PC-9 (cell line): ENCODE measurements at regions of chr10 and their contacts with region 1.

Region 1: GRCh38 chr10:70537344-70538209 is 59.0 kb downstream of the PALD1 start:
- DNase-seq: peak in 1 of 2 experiments; percentile 61
- H3K4me3 ChIP-seq: no peak overlapping the region
- H3K27ac ChIP-seq: no peak overlapping the region
- H3K4me1 ChIP-seq: no peaks in the 10 kb centered on the region
- H3K27me3 ChIP-seq: no peaks in the 10 kb centered on the region
- CTCF ChIP-seq: peak; percentile 73

Region 2: GRCh38 chr10:70331486-70332268 is 205.9 kb before region 1 on chr10:
- CTCF ChIA-PET with region 1: no interaction called
- POLR2A ChIA-PET with region 1: no interaction called
- intact Hi-C with region 1: no loop called
- DNase-seq: peak; percentile 82 to 98
- H3K4me3 ChIP-seq: no peak overlapping the region
- H3K27ac ChIP-seq: peak overlapping the region; percentile 59
- H3K4me1 ChIP-seq: peaks cover 27% of the 10 kb centered on the region
- H3K27me3 ChIP-seq: no peaks in the 10 kb centered on the region
- CTCF ChIP-seq: peak; percentile 55; the same call in 1 of the 2 replicates

Region 3: GRCh38 chr10:70478191-70479164 is 59.1 kb before region 1 on chr10 and contains the start of gene PALD1:
- CTCF ChIA-PET with region 1: no interaction called
- POLR2A ChIA-PET with region 1: no interaction called
- intact Hi-C with region 1: loop called (anchors 5 kb)
- DNase-seq: peak; percentile 53 to 75
- H3K4me3 ChIP-seq: peak within 1 kb of the TSS; percentile 71
- H3K27ac ChIP-seq: peak within 1 kb of the TSS; percentile 52
- H3K4me1 ChIP-seq: peaks cover 48% of the 10 kb centered on the region
- H3K27me3 ChIP-seq: no peaks in the 10 kb centered on the region
- CTCF ChIP-seq: no peak
- total RNA-seq, gene PALD1: 5.2 and 7.5 TPM in 2 replicates

Region 4: GRCh38 chr10:70672165-70673042 is 134.8 kb after region 1 on chr10 and contains the start of gene ADAMTS14:
- CTCF ChIA-PET with region 1: no interaction called
- POLR2A ChIA-PET with region 1: no interaction called
- intact Hi-C with region 1: no loop called
- DNase-seq: peak; percentile 34 to 56
- H3K4me3 ChIP-seq: peak within 1 kb of the TSS; percentile 54
- H3K27ac ChIP-seq: no peak within 1 kb of the TSS
- H3K4me1 ChIP-seq: peaks cover 26% of the 10 kb centered on the region
- H3K27me3 ChIP-seq: peaks cover 11% of the 10 kb centered on the region; the same call in 1 of the 2 replicates
- CTCF ChIP-seq: no peak
- total RNA-seq, gene ADAMTS14: 1.9 and 2.7 TPM in 2 replicates